K562 (cell line): ENCODE measurements at regions of chr2 and their contacts with region 1.

Region 1: GRCh38 chr2:32039447-32040219 is at the start of gene DPY30:
- DNase-seq: peak; percentile 89 to 97 (median 90)
- ATAC-seq: peak; percentile 93
- H3K4me3 ChIP-seq: peak within 1 kb of the TSS; percentile 73
- H3K27ac ChIP-seq: peak within 1 kb of the TSS; percentile 63
- H3K4me1 ChIP-seq: peaks cover 8 to 15% of the 10 kb centered on the region in 2 experiments; a peak in 2 of 5 replicates
- H3K27me3 ChIP-seq: no peaks in the 10 kb centered on the region
- CTCF ChIP-seq: 0 out of 6 replicates have a peak, but pooled peaks of 2 of the 3 experiments have one; percentile 3 to 19
- EP300 ChIP-seq: no peak
- POLR2A ChIP-seq: peak; percentile 98
- RAD21 ChIP-seq: 0 out of 4 replicates have a peak, but pooled peaks of 1 of the 2 experiments have one; percentile 17
- polyA plus RNA-seq, gene DPY30: 375 to 402 TPM

Region 2: GRCh38 chr2:32058130-32058529 is 18.5 kb after region 1 on chr2:
- CTCF ChIA-PET with region 1: no interaction called
- POLR2A ChIA-PET with region 1: interaction called, 26 read pairs
- in situ Hi-C with region 1: no loop called
- intact Hi-C with region 1: no loop called
- DNase-seq: peak; percentile 42 to 69 (median 57)
- ATAC-seq: peak; percentile 46
- H3K4me3 ChIP-seq: no peak overlapping the region
- H3K27ac ChIP-seq: peak overlapping the region; percentile 54; the same call in 2 of the 3 replicates
- H3K4me1 ChIP-seq: peaks cover 10 to 11% of the 10 kb centered on the region in 2 experiments; a peak in 4 of 5 replicates
- H3K27me3 ChIP-seq: no peaks in the 10 kb centered on the region
- CTCF ChIP-seq: no peak
- EP300 ChIP-seq: no peak
- POLR2A ChIP-seq: no peak
- RAD21 ChIP-seq: no peak

Region 3: DNA sequence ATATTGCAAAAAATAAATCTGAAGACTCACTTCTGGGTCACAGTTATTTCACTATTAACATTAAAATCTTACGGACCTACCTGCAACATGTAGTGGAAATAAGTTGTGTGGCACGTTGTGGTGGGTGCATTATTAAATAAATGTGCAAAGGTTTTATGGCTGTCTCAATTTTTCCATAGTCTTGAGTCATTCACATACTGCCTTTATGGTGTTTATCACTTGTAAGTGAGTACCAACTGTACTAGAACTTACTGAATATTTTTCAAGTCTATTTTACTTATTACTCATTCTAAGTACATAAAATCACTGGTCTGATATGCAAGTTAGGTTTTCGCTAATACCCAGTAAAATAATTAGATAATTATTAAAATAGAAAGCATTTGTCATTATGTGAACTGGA is 78.4 kb after region 1 on chr2:
- CTCF ChIA-PET with region 1: no interaction called
- POLR2A ChIA-PET with region 1: no interaction called
- in situ Hi-C with region 1: no loop called
- intact Hi-C with region 1: no loop called
- DNase-seq: no peak
- ATAC-seq: no peak
- H3K4me3 ChIP-seq: no peak overlapping the region
- H3K27ac ChIP-seq: no peak overlapping the region
- H3K4me1 ChIP-seq: no peaks in the 10 kb centered on the region
- H3K27me3 ChIP-seq: no peaks in the 10 kb centered on the region
- CTCF ChIP-seq: no peak
- EP300 ChIP-seq: no peak
- POLR2A ChIP-seq: no peak
- RAD21 ChIP-seq: no peak

Region 4: GRCh38 chr2:32246911-32247310 is 207.3 kb after region 1 on chr2:
- CTCF ChIA-PET with region 1: no interaction called
- POLR2A ChIA-PET with region 1: no interaction called
- in situ Hi-C with region 1: no loop called
- intact Hi-C with region 1: no loop called
- DNase-seq: no peak
- ATAC-seq: no peak
- H3K4me3 ChIP-seq: no peak overlapping the region
- H3K27ac ChIP-seq: no peak overlapping the region
- H3K4me1 ChIP-seq: no peaks in the 10 kb centered on the region
- H3K27me3 ChIP-seq: no peaks in the 10 kb centered on the region; a peak in 1 of 5 replicates
- CTCF ChIP-seq: no peak
- EP300 ChIP-seq: no peak
- POLR2A ChIP-seq: no peak
- RAD21 ChIP-seq: no peak